ENCODE measurements at regions of chr2 and their contacts with region 1.

Region 1: GRCh38 chr2:42286268-42286946 is 74.6 kb downstream of the COX7A2L start:
- DNase-seq: no peak
- H3K4me3 ChIP-seq: no peak overlapping the region
- H3K4me3 Mint-ChIP-seq: peak overlapping the region in 3 of 8 donors; percentile 3 to 47 (median 3)
- H3K27ac ChIP-seq: no peak overlapping the region
- H3K27ac Mint-ChIP-seq: peak overlapping the region; percentile 45 to 93 (median 60)
- H3K4me1 ChIP-seq: peaks cover 34% of the 10 kb centered on the region
- H3K4me1 Mint-ChIP-seq: peaks cover 28 to 45% (median 34%) of the 10 kb centered on the region in 4 donors
- H3K27me3 ChIP-seq: no peaks in the 10 kb centered on the region
- H3K27me3 Mint-ChIP-seq: no peaks in the 10 kb centered on the region

Region 2: GRCh38 chr2:42029171-42029570 is 257.2 kb before region 1 on chr2:
- CTCF ChIA-PET with region 1: no interaction called
- POLR2A ChIA-PET with region 1: no interaction called
- intact Hi-C with region 1: no loop called
- DNase-seq: no peak
- H3K4me3 ChIP-seq: no peak overlapping the region
- H3K4me3 Mint-ChIP-seq: no peak overlapping the region
- H3K27ac ChIP-seq: no peak overlapping the region
- H3K27ac Mint-ChIP-seq: no peak overlapping the region
- H3K4me1 ChIP-seq: no peaks in the 10 kb centered on the region
- H3K4me1 Mint-ChIP-seq: peaks cover 0 to 4% (median 2%) of the 10 kb centered on the region in 4 donors
- H3K27me3 ChIP-seq: no peaks in the 10 kb centered on the region
- H3K27me3 Mint-ChIP-seq: peaks cover 15 to 16% of the 10 kb centered on the region in 2 donors

Region 3: GRCh38 chr2:42309366-42309765 is 23.0 kb after region 1 on chr2:
- CTCF ChIA-PET with region 1: no interaction called
- POLR2A ChIA-PET with region 1: interaction called, 3 read pairs
- intact Hi-C with region 1: loop called (anchors 2 kb)
- DNase-seq: no peak
- H3K4me3 ChIP-seq: no peak overlapping the region
- H3K4me3 Mint-ChIP-seq: no peak overlapping the region
- H3K27ac ChIP-seq: no peak overlapping the region
- H3K27ac Mint-ChIP-seq: peak overlapping the region; percentile 31 to 88 (median 74)
- H3K4me1 ChIP-seq: peaks cover 17% of the 10 kb centered on the region
- H3K4me1 Mint-ChIP-seq: peaks cover 20 to 42% (median 29%) of the 10 kb centered on the region in 4 donors
- H3K27me3 ChIP-seq: no peaks in the 10 kb centered on the region
- H3K27me3 Mint-ChIP-seq: no peaks in the 10 kb centered on the region

Measured in CD4-positive, alpha-beta memory T cell (primary cell).